Gastrocnemius medialis (tissue), 4 donors: ENCODE measurements at regions of chr10 and their contacts with region 1.

Region 1: DNA sequence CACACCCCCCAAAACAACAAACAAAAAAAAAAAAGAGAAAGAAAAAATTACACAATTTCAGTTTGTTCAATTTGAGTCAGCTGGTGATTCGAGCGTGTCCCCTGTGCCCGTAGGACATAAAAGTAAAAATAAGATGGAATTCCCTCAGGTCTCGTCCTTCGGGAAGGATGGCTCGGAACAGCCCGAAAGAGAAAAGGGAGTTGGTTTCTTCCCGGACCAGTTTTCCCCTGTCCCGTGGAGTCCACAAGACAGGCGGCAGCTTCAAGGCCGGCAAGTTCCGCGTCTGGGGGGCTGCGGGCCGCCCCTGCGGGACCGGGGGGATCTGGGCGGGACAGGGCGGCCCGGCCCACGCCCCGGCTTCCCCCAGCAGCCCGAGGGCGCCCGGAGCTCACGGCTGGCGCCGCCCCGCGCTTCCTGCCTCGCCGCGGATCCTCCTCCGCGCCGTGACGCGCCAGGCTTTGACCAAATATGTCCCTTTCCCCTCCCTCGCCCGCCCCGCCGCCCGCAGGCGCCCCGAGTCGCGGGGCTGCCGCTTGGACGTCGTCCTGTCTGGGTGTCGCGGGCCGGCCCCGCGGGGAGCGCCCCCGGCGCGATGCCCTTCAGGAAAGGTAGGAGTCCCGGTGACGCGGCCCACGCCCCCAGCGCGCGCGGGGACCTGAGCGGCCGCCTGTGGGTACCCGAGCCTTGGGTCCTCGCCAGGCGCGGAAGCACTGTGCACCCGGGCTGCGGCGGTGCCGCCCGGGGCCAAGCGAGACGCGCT is 55.8 kb downstream of the RBM17 start:
- DNase-seq: peak; percentile 89 to 91
- ATAC-seq: peak; percentile 59 to 71
- H3K4me3 ChIP-seq: peak overlapping the region; percentile 77 to 94 (median 81)
- H3K27ac ChIP-seq: peak overlapping the region; percentile 83 to 95 (median 89)
- H3K4me1 ChIP-seq: peaks cover 45 to 59% of the 10 kb centered on the region in 2 donors
- H3K27me3 ChIP-seq: no peaks in the 10 kb centered on the region
- CTCF ChIP-seq: peak in 1 of 5 experiments; percentile 31
- POLR2A ChIP-seq: peak; percentile 92 to 98

Region 2: DNA sequence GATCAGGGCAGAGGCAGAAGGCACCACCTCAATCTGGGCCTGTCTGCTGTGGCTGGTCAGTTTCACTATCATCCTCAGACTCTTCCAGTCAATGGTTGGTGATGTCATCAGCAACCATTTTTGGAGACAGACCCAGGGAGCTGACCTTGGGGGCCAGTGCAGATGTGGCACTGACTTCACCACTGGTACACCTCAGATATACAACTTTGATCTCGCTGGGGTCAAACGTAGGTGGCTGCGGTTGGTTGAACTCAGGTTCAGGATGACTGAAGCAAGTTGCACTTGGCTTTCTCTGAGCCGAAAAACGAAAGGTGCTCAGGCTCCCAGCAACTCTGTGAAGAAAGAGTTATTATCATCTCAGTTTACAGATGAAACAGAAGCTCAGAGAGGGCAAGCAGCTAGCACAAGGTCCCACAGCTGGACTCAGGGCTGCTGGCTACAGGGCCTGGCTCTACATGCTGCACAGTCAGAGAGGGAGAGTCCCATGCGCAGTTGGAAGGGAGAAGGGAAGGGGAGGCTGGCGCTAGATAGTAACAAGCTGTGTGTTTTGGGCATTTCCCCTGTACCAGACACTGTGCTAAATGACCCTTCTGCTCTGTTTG is 282.1 kb before region 1 on chr10:
- in situ Hi-C with region 1: no loop called
- intact Hi-C with region 1: no loop called
- DNase-seq: no peak
- ATAC-seq: no peak
- H3K4me3 ChIP-seq: no peak overlapping the region
- H3K27ac ChIP-seq: no peak overlapping the region
- H3K4me1 ChIP-seq: no peaks in the 10 kb centered on the region
- H3K27me3 ChIP-seq: no peaks in the 10 kb centered on the region
- CTCF ChIP-seq: no peak
- POLR2A ChIP-seq: no peak

Region 3: DNA sequence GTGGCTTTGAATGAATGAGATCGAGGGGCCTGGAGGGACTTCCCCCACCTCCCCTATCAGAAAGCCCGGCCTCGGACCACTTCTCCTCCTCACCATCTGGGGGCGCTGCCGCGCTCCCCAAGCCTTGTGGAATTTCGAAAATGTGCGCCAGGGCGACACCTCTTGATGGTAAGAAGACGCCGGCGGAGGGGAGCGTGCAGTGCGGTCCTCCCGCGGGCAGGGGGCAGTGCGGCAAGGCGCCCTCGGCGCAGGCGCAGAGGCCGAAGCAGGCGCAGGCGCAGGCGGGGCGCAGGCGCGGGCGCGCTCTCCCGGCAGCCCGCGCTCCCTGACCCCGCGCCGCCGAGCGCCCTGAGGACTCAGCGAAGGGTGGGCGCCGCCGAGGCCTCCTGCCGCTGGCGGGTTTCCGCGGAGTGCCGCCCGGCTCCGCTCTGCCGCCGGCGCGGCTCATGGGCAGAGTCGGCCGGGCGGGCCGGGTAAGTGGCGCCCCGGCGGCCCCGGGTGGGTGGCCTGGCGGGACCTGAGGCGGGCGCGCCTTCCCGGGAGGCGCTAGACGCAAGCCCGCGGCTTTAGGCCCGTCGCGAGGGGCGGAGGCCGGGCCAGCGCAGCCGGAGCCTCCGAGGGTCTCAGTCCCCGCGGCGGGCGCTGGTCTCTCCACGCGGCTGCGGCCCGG is 55.7 kb before region 1 on chr10 and contains the start of gene RBM17:
- in situ Hi-C with region 1: no loop called
- intact Hi-C with region 1: loop called (anchors 2 kb)
- DNase-seq: peak; percentile 92 to 96
- ATAC-seq: peak; percentile 86 to 91
- H3K4me3 ChIP-seq: peak within 1 kb of the TSS; percentile 83 to 94 (median 88)
- H3K27ac ChIP-seq: peak within 1 kb of the TSS; percentile 78 to 96 (median 82)
- H3K4me1 ChIP-seq: peaks cover 39 to 48% of the 10 kb centered on the region in 2 donors
- H3K27me3 ChIP-seq: peaks cover 0 to 5% (median 0%) of the 10 kb centered on the region in 3 donors
- CTCF ChIP-seq: peak; percentile 99 to 100 (median 100)
- POLR2A ChIP-seq: peak; percentile 83 to 87
- total RNA-seq, gene RBM17: 53.2 to 67.4 (median 60.1) TPM

Region 4: DNA sequence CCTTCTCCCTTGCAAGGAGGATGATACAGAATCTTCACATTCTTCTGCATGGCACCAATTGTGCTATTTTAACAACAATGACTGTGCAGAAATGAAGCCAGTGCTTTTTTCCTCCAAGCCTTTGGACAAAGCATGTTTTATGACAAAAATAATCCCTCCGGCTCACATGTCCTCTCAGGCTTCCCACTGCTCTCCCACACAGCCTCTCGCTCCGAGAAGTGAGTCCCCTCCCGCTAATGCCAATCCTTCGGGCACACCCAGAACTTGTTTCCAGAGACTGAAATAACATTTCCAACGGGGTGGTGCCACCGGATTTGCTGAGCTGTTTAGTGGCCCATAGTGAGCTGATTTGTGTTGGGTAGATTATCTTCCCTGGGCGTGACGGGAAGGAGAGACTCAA is 19.9 kb before region 1 on chr10:
- in situ Hi-C with region 1: no loop called
- intact Hi-C with region 1: loop called (anchors 2 kb)
- DNase-seq: peak; percentile 59 to 74
- ATAC-seq: peak; percentile 72 to 73
- H3K4me3 ChIP-seq: peak overlapping the region in 1 of 4 donors; percentile 9
- H3K27ac ChIP-seq: peak overlapping the region; percentile 62 to 77 (median 68)
- H3K4me1 ChIP-seq: peaks cover 22 to 28% of the 10 kb centered on the region in 2 donors
- H3K27me3 ChIP-seq: no peaks in the 10 kb centered on the region
- CTCF ChIP-seq: no peak
- POLR2A ChIP-seq: peak in 1 of 2 donors; percentile 9

Region 5: DNA sequence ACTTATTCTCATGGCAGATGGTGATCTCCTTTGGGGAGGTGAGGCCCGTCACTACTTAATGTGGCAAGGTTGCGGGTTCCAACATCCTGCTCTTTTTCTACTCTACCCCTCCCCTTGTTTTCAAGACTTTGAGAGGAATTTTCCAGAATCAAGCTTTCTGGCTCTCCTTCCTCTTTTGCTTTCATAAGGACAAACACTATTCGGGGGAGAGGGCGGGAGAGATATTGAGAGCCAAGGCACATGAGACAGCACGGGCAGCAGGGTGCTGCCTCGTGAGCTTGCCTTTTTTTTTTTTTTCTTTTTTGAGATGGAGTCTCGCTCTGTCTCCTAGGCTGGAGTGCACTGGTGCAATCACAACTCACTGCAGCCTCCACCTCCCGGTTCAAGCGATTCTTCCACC is 51.3 kb after region 1 on chr10:
- in situ Hi-C with region 1: no loop called
- intact Hi-C with region 1: loop called (anchors 2 kb)
- DNase-seq: no peak
- ATAC-seq: no peak
- H3K4me3 ChIP-seq: no peak overlapping the region
- H3K27ac ChIP-seq: peak overlapping the region; percentile 89 to 98 (median 95)
- H3K4me1 ChIP-seq: peaks cover 76 to 82% of the 10 kb centered on the region in 2 donors
- H3K27me3 ChIP-seq: no peaks in the 10 kb centered on the region
- CTCF ChIP-seq: no peak
- POLR2A ChIP-seq: peak in 1 of 2 donors; percentile 14

Region 6: GRCh38 chr10:6580279-6581029 is 435.9 kb after region 1 on chr10:
- in situ Hi-C with region 1: no loop called
- intact Hi-C with region 1: loop called (anchors 5 kb)
- DNase-seq: peak; percentile 65 to 86
- ATAC-seq: peak; percentile 71 to 72
- H3K4me3 ChIP-seq: peak overlapping the region; percentile 69 to 74 (median 73)
- H3K27ac ChIP-seq: peak overlapping the region; percentile 93 to 96 (median 94)
- H3K4me1 ChIP-seq: peaks cover 15 to 18% of the 10 kb centered on the region in 2 donors
- H3K27me3 ChIP-seq: no peaks in the 10 kb centered on the region
- CTCF ChIP-seq: peak in 4 of 5 experiments; percentile 76 to 92 (median 90)
- POLR2A ChIP-seq: peak; percentile 92